Activated CD4-positive, alpha-beta T cell treated with anti-CD3 and anti-CD28 coated beads, Interleukin-2, amount 10 ng/mL, durations not matched to agents 24 days and 14 days (primary cell): ENCODE measurements at regions of chr18 and their contacts with region 1.

Region 1: DNA sequence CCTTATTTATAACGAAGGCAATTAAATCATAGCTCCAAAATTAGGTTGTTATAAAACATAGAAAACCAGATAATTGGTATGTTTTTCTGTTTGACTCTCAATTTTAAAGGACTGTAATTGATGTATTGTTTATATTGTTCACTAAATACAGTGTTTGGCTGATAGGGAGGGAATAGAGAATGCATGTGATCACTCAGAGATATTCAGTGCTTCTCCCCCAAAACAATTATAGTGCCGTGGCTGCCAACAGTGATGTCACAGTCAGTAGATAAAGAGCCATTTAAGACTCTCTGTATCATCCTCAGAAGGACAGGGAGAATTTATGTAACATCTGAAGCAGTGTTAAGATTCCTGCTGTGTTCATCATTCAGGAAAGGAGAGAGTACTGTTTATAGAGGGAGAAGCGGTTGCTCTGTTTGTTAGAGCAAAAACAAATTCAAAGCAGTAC is 69.6 kb downstream of the PHLPP1 start:
- DNase-seq: no peak
- H3K4me3 Mint-ChIP-seq: peak overlapping the region; percentile 1
- H3K27ac Mint-ChIP-seq: peak overlapping the region; percentile 53
- H3K4me1 Mint-ChIP-seq: peaks cover 38% of the 10 kb centered on the region
- H3K27me3 Mint-ChIP-seq: peaks cover 3% of the 10 kb centered on the region

Region 2: GRCh38 chr18:61785588-61785987 is 999.4 kb before region 1 on chr18:
- intact Hi-C with region 1: no loop called
- DNase-seq: no peak
- H3K4me3 Mint-ChIP-seq: no peak overlapping the region
- H3K27ac Mint-ChIP-seq: no peak overlapping the region
- H3K4me1 Mint-ChIP-seq: no peaks in the 10 kb centered on the region
- H3K27me3 Mint-ChIP-seq: peaks cover 10% of the 10 kb centered on the region

Region 3: GRCh38 chr18:62521593-62521992 is 263.4 kb before region 1 on chr18:
- intact Hi-C with region 1: no loop called
- DNase-seq: peak; percentile 65
- H3K4me3 Mint-ChIP-seq: peak overlapping the region; percentile 93
- H3K27ac Mint-ChIP-seq: peak overlapping the region; percentile 90
- H3K4me1 Mint-ChIP-seq: peaks cover 19% of the 10 kb centered on the region
- H3K27me3 Mint-ChIP-seq: no peaks in the 10 kb centered on the region

Region 4: DNA sequence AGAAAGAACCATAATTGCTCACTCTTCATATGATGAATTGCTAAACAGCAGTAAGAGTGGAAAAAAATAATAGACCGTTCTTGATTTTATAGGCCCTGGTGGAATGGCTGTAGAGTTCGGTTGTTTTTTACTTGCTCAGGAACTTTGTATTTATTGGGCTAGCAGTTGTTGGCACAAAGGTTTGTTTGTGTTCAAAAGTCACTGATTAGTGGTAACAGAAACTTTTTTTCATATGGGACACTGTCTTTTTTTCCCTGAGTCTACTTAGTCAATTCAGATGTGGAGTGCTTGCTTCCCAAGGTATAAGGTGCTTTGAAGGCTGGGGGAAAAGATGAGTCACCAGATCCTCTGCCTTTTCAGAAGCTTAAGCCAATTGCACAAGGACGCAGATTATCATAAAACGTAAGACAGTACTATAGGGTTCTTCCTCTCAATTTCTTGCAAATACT is 43.8 kb before region 1 on chr18:
- intact Hi-C with region 1: loop called (anchors 2 kb)
- DNase-seq: no peak
- H3K4me3 Mint-ChIP-seq: no peak overlapping the region
- H3K27ac Mint-ChIP-seq: peak overlapping the region; percentile 61
- H3K4me1 Mint-ChIP-seq: peaks cover 12% of the 10 kb centered on the region
- H3K27me3 Mint-ChIP-seq: no peaks in the 10 kb centered on the region

Region 5: GRCh38 chr18:62767321-62767720 is 17.7 kb before region 1 on chr18:
- intact Hi-C with region 1: loop called (anchors 1 kb)
- DNase-seq: no peak
- H3K4me3 Mint-ChIP-seq: no peak overlapping the region
- H3K27ac Mint-ChIP-seq: no peak overlapping the region
- H3K4me1 Mint-ChIP-seq: peaks cover 23% of the 10 kb centered on the region
- H3K27me3 Mint-ChIP-seq: no peaks in the 10 kb centered on the region